CD4-positive, alpha-beta memory T cell (primary cell): ENCODE measurements at regions of chr16 and their contacts with region 1.

Region 1: GRCh38 chr16:31458844-31459721 is at the start of gene ARMC5:
- DNase-seq: peak; percentile 98 to 99 (median 99)
- H3K4me3 ChIP-seq: peak within 1 kb of the TSS; percentile 79 to 95
- H3K4me3 Mint-ChIP-seq: peak within 1 kb of the TSS; percentile 91 to 95 (median 94)
- H3K27ac ChIP-seq: peak within 1 kb of the TSS; percentile 99
- H3K27ac Mint-ChIP-seq: peak within 1 kb of the TSS; percentile 94 to 99 (median 98)
- H3K4me1 ChIP-seq: peaks cover 53% of the 10 kb centered on the region
- H3K4me1 Mint-ChIP-seq: peaks cover 25 to 60% (median 37%) of the 10 kb centered on the region in 4 donors
- H3K27me3 ChIP-seq: no peaks in the 10 kb centered on the region
- H3K27me3 Mint-ChIP-seq: no peaks in the 10 kb centered on the region
- total RNA-seq, gene ARMC5: 6.5 to 7.0 TPM

Region 2: GRCh38 chr16:30874821-30875717 is 584.0 kb before region 1 on chr16:
- CTCF ChIA-PET with region 1: no interaction called
- POLR2A ChIA-PET with region 1: interaction called, 10 read pairs
- intact Hi-C with region 1: no loop called
- DNase-seq: peak; percentile 85 to 89 (median 87)
- H3K4me3 ChIP-seq: peak overlapping the region; percentile 89 to 94
- H3K4me3 Mint-ChIP-seq: peak overlapping the region; percentile 92 to 99 (median 97)
- H3K27ac ChIP-seq: peak overlapping the region; percentile 84
- H3K27ac Mint-ChIP-seq: peak overlapping the region; percentile 91 to 99 (median 94)
- H3K4me1 ChIP-seq: peaks cover 23% of the 10 kb centered on the region
- H3K4me1 Mint-ChIP-seq: peaks cover 16 to 50% (median 31%) of the 10 kb centered on the region in 4 donors
- H3K27me3 ChIP-seq: no peaks in the 10 kb centered on the region
- H3K27me3 Mint-ChIP-seq: no peaks in the 10 kb centered on the region

Region 3: DNA sequence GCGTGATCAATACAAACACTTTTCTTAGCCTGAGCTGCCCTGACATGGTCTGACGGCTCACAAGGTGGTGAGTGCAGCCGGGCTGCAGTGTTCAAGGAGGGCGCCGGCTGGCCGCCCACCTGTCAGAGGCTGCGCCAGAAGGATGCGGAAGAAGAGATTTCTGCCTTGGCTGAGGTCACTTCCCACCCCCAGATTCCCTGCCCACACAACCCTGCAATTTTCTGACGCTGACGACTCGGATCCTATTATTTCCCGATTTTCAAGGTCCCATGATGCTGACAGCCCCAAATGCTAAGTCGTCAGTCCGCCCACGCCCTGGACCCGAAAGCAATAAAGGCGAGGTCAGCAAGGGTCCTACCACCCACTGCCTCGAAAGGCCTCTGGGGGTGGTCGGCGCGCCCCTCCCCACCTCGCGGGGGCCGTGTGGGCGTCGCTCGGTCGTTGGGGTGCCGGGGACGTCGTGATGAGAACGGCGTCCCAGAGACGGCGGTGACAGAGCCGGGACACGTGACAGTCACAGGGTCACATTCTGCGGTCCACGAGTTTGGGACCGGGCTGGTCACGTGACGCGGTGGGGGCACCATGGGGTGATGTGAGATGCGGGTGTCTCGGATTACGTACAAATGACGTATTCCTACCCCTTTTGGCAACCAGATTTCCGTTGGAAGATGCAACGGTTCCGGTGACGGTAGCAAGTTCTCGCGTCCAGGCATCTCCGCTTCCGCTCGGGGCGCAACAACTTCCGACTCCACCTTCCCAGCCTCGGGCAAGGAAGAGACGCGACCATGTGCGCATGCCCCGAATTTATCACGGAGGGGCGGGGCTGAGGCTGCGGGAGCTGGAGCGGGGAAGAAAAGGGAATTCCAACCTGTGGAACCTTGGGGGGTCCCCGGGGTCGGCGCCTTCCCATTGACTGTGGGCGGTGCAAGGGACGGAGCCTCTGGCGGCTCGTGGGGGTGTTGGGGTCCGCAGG is 426.1 kb before region 1 on chr16 and contains the start of gene STX4:
- CTCF ChIA-PET with region 1: interaction called, 3 read pairs
- POLR2A ChIA-PET with region 1: interaction called, 4 read pairs
- intact Hi-C with region 1: loop called (anchors 1 kb)
- DNase-seq: peak; percentile 95 to 100 (median 98)
- H3K4me3 ChIP-seq: peak within 1 kb of the TSS; percentile 83 to 97
- H3K4me3 Mint-ChIP-seq: peak within 1 kb of the TSS; percentile 91 to 98 (median 95)
- H3K27ac ChIP-seq: peak within 1 kb of the TSS; percentile 86
- H3K27ac Mint-ChIP-seq: peak within 1 kb of the TSS; percentile 93 to 98 (median 98)
- H3K4me1 ChIP-seq: peaks cover 24% of the 10 kb centered on the region
- H3K4me1 Mint-ChIP-seq: peaks cover 6 to 38% (median 22%) of the 10 kb centered on the region in 4 donors
- H3K27me3 ChIP-seq: no peaks in the 10 kb centered on the region
- H3K27me3 Mint-ChIP-seq: no peaks in the 10 kb centered on the region
- total RNA-seq, gene STX4: 106 to 111 TPM

Region 4: DNA sequence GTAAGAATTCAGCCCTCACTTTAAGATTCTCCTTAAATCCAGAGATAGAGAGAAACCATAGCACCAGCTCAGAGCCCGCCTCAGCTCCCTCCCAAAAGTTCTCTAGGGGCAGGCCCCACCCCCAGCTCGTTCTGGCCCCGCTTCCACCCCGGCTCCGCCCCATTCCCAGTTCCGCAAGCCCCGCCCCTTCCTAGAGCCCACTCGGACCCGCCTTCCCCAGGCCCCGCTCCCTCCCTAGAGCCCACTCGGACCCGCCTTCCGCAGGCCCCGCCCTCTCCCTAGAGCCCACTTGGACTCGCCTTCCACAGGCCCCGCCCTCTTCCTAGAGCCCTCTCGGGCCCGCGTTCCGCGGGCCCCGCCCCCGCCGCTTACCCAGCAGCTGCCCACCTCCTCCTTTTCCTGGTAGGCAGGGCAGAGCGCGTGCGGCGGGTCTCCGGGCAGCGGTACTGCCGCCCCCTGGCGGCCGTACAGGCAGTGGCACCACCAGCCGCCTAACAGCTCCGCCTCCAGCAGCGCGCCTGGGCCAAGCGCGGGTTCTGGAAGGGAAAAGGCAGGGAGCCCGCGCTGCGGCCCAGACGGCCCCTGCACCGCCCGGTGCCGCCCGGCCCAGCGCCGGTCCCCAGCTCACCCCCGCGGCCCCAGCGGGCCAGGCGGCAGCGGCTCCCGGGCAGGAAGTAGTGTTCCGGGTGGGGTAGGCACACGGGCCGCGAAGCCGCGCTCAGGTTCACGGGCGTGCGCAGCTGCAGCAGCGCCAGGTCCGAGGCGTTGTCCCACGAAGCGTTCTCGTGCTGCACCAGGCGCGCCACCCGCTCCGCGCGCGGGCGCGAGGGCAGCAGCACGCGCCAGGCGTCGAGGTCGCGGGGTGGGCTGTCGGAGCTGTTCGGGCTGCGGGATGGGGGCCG is 316.7 kb before region 1 on chr16:
- CTCF ChIA-PET with region 1: interaction called, 4 read pairs
- POLR2A ChIA-PET with region 1: interaction called, 16 read pairs
- intact Hi-C with region 1: loop called (anchors 1 kb)
- DNase-seq: peak; percentile 94 to 97 (median 96)
- H3K4me3 ChIP-seq: peak overlapping the region in 1 of 2 donors; percentile 75
- H3K4me3 Mint-ChIP-seq: peak overlapping the region; percentile 63 to 80 (median 74)
- H3K27ac ChIP-seq: peak overlapping the region; percentile 42
- H3K27ac Mint-ChIP-seq: peak overlapping the region; percentile 72 to 94 (median 91)
- H3K4me1 ChIP-seq: peaks cover 15% of the 10 kb centered on the region
- H3K4me1 Mint-ChIP-seq: peaks cover 3 to 14% (median 10%) of the 10 kb centered on the region in 4 donors
- H3K27me3 ChIP-seq: no peaks in the 10 kb centered on the region
- H3K27me3 Mint-ChIP-seq: no peaks in the 10 kb centered on the region

Region 5: DNA sequence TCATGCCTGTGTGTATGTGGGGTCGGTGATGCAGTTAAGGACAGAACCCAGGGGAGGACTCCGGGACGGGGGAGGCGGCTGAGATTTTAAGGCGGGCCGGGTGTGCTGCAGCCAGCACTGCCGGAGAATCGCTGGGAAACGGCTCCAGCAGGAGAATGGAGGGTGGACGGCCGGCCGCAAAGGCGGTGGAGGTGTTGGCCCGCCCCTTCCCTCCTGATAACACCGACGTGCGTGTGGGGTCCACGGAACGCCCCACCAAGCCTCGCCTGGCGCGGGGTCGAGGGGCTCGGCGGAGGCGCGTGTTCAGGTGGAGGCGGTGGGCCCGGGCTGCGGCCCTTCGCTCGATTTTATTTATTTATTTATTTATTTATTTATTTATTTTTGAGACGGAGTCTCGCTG is 17.1 kb before region 1 on chr16:
- CTCF ChIA-PET with region 1: interaction called, 36 read pairs
- POLR2A ChIA-PET with region 1: interaction called, 17 read pairs
- intact Hi-C with region 1: loop called (anchors 2 kb)
- DNase-seq: no peak
- H3K4me3 ChIP-seq: no peak overlapping the region
- H3K4me3 Mint-ChIP-seq: peak overlapping the region; percentile 75 to 91 (median 84)
- H3K27ac ChIP-seq: no peak overlapping the region
- H3K27ac Mint-ChIP-seq: peak overlapping the region in 2 of 7 donors; percentile 3 to 73
- H3K4me1 ChIP-seq: no peaks in the 10 kb centered on the region
- H3K4me1 Mint-ChIP-seq: peaks cover 1 to 9% (median 6%) of the 10 kb centered on the region in 4 donors
- H3K27me3 ChIP-seq: no peaks in the 10 kb centered on the region
- H3K27me3 Mint-ChIP-seq: peaks cover 0 to 1% of the 10 kb centered on the region in 2 donors

Region 6: DNA sequence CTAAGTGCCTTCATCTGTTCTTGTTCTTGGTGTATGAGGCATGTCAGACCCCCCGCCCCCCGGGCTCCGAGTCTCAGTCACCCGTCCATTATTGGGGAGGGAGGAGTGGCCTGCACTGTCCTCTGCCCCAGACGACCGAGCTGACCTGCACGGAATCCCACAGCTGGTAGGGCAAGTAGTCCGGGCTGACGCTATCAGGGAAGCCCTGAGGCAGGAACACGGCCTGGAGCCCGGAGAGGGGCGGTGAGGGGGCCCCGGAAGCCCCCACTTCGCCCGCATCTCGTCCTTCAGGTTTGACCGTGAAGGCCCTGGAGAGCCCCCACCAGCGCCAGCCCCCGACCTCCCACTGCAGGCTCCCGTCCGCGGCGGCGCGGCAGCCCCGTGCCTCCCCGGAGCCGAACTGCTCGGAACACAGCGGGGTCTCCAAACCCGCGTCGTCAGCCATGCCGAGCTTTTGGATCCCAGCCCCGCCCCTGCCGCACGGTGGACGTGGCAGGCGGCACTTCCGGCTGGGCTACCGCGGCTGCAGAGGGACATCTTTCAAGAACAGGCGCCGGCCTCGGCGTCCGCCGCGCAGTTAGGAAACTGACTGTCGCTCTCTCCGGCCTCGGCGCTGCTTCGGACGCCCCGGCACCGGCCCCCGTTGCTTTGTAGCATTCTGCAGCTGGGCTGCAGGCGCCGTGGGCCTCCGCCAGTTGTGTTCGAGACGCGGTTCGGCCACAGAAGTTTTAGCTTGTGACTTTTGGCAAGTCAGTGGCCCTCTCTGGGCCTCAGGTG is 49.0 kb after region 1 on chr16 and contains the start of gene RUSF1:
- CTCF ChIA-PET with region 1: interaction called, 15 read pairs
- POLR2A ChIA-PET with region 1: interaction called, 55 read pairs
- intact Hi-C with region 1: loop called (anchors 1 kb)
- DNase-seq: peak; percentile 74 to 82 (median 77)
- H3K4me3 ChIP-seq: peak within 1 kb of the TSS; percentile 92 to 94
- H3K4me3 Mint-ChIP-seq: peak within 1 kb of the TSS; percentile 87 to 97 (median 93)
- H3K27ac ChIP-seq: peak within 1 kb of the TSS; percentile 83
- H3K27ac Mint-ChIP-seq: peak within 1 kb of the TSS; percentile 91 to 98 (median 97)
- H3K4me1 ChIP-seq: peaks cover 36% of the 10 kb centered on the region
- H3K4me1 Mint-ChIP-seq: peaks cover 22 to 59% (median 45%) of the 10 kb centered on the region in 4 donors
- H3K27me3 ChIP-seq: no peaks in the 10 kb centered on the region
- H3K27me3 Mint-ChIP-seq: no peaks in the 10 kb centered on the region
- total RNA-seq, gene RUSF1: 101 to 110 TPM

Region 7: GRCh38 chr16:31527734-31528274 is 68.7 kb after region 1 on chr16 and contains the start of gene AHSP:
- CTCF ChIA-PET with region 1: no interaction called
- POLR2A ChIA-PET with region 1: no interaction called
- intact Hi-C with region 1: no loop called
- DNase-seq: no peak
- H3K4me3 ChIP-seq: no peak within 1 kb of the TSS
- H3K4me3 Mint-ChIP-seq: peak within 1 kb of the TSS in 1 of 8 donors; percentile 28
- H3K27ac ChIP-seq: no peak within 1 kb of the TSS
- H3K27ac Mint-ChIP-seq: no peak within 1 kb of the TSS
- H3K4me1 ChIP-seq: no peaks in the 10 kb centered on the region
- H3K4me1 Mint-ChIP-seq: peaks cover 0 to 12% (median 5%) of the 10 kb centered on the region in 4 donors
- H3K27me3 ChIP-seq: peaks cover 11% of the 10 kb centered on the region
- H3K27me3 Mint-ChIP-seq: peaks cover 12 to 14% of the 10 kb centered on the region in 2 donors
- total RNA-seq, gene AHSP: not detected

Region 8: GRCh38 chr16:31868691-31869167 is 409.6 kb after region 1 on chr16:
- CTCF ChIA-PET with region 1: interaction called, 31 read pairs
- POLR2A ChIA-PET with region 1: interaction called, 33 read pairs
- intact Hi-C with region 1: loop called (anchors 1 kb)
- DNase-seq: peak; percentile 74 to 85 (median 78)
- H3K4me3 ChIP-seq: peak overlapping the region; percentile 65 to 67
- H3K4me3 Mint-ChIP-seq: peak overlapping the region; percentile 71 to 84 (median 78)
- H3K27ac ChIP-seq: peak overlapping the region; percentile 71
- H3K27ac Mint-ChIP-seq: peak overlapping the region; percentile 74 to 96 (median 92)
- H3K4me1 ChIP-seq: peaks cover 44% of the 10 kb centered on the region
- H3K4me1 Mint-ChIP-seq: peaks cover 31 to 50% (median 38%) of the 10 kb centered on the region in 4 donors
- H3K27me3 ChIP-seq: no peaks in the 10 kb centered on the region
- H3K27me3 Mint-ChIP-seq: no peaks in the 10 kb centered on the region